Dendritic cell treated with granulocyte-macrophage colony-stimulating factor and Interleukin-4, amounts not matched to agents 40 ng/mL and 50 ng/mL, for 4 days (primary cell): ENCODE measurements at regions of chr7 and their contacts with region 1.

Region 1: DNA sequence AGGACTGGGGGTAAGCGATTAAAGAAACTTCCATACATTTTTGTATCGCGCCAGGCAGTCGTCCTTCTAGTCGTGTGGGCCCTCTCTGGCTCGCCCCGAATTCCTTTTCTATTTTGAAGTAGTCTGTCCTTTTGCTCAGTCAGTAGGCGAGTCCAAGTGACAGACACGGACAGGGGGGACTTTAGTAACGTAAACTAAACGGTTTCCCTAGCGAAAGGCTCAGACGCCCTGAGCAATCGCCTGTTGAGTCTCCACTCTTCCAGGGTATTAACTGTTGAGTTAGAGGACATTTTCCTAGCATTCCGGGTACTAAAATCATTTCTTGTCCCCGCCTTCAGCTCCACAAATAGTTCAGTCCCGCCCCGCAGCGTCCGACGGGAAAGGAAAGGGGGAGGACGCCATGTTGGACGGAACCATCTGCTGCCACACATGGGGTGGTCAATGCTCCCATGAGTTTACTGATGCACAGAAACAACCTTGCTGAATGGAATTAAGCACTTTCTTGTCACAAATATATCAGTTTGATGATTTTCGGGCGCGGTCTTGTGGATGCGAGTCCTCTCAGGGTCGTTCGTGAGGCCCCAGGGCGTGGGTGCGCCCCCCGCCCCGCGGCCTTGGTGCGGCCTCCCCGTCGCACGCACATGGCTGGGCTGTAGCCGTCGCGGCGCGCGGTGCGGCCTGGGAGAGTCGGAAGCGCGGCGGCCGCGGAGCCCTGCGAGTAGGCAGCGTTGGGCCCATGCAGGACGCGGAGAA is at the start of gene EIF3B:
- H3K4me3 Mint-ChIP-seq: peak within 1 kb of the TSS; percentile 87
- H3K27ac Mint-ChIP-seq: peak within 1 kb of the TSS; percentile 100
- H3K4me1 Mint-ChIP-seq: peaks cover 28% of the 10 kb centered on the region
- H3K27me3 Mint-ChIP-seq: no peaks in the 10 kb centered on the region

Region 2: DNA sequence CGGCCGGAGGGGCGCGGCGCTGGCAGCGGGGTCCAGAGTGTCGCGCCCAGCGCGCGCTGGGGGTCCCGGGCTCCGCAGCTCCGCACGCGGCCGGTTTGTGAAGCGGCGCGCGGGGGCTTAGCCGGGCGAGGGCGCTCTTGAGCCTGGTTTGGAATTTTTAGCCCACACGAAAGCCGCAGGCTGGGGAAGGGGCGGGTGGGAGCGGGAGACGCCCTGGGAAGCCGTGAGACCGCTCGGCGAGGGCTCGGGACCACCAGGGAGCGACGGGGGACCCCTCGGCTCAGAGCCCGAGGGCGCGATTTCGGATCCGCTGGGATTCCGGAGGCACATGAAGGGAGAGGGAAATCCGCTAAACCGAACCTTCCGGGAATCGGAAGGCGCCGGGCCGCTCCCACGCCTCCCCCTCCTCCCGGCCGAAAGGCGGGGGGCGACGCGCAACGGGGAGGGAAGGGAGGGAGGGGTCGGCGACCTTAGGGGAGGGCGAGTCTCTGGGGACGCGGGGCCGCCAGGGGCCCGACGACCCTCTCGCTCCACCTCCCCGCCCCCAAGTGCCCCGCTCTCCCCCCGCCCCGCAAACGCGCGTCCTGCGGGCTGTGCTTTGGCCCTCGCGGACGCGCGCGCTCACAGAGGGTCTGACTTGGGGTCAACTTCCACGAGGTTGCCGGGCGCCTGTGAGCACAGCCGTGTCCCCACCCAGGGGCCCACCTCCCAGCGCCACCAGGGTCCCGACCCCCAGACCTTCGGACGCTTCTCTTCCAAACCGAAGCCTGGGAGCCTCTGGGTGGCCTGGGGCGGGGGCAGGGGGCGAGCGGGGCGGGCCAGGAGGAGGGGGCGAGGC is 689.4 kb before region 1 on chr7:
- intact Hi-C with region 1: loop called (anchors 10 kb)
- H3K4me3 Mint-ChIP-seq: peak overlapping the region; percentile 62
- H3K27ac Mint-ChIP-seq: no peak overlapping the region
- H3K4me1 Mint-ChIP-seq: peaks cover 11% of the 10 kb centered on the region
- H3K27me3 Mint-ChIP-seq: peaks cover 73% of the 10 kb centered on the region

Region 3: DNA sequence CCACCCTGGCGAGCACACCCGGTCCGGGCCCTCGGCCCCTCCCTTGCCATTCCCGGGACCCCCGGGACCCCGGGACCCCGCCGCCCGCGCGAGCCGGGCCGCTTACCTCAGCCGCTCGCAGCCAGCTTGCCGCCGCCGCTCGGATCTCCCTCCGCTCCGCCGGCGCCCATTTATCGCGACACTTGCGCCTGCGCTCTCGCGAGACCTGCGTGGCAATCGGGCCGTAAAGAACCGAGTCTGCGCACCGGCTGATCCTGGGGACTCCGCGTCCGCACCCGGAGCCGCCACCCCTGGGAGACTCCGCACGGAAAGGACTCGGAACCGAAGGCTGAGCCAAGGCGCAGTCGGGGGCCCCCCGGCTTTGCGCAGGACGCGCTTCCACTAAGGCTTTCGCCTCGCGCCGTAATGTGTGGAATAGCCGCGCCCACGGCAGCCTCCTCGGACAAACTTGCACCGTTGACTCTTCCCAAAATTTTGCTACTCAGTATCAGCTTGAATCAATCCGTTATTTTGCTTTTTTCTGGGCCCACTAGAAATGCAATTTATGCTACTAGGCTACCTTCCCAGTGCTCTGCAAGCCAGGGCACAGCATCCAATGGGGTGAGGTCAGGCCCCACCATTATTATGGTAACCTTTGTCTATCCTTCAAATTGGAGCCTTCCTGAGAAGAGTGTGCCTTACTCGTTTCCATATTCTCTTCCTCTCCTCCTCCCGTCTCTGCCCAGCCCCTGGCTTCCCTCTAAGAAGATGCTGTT is 121.4 kb before region 1 on chr7 and contains the start of gene MAD1L1:
- intact Hi-C with region 1: loop called (anchors 5 kb)
- H3K4me3 Mint-ChIP-seq: peak within 1 kb of the TSS; percentile 88
- H3K27ac Mint-ChIP-seq: peak within 1 kb of the TSS; percentile 90
- H3K4me1 Mint-ChIP-seq: peaks cover 65% of the 10 kb centered on the region
- H3K27me3 Mint-ChIP-seq: no peaks in the 10 kb centered on the region

Region 4: DNA sequence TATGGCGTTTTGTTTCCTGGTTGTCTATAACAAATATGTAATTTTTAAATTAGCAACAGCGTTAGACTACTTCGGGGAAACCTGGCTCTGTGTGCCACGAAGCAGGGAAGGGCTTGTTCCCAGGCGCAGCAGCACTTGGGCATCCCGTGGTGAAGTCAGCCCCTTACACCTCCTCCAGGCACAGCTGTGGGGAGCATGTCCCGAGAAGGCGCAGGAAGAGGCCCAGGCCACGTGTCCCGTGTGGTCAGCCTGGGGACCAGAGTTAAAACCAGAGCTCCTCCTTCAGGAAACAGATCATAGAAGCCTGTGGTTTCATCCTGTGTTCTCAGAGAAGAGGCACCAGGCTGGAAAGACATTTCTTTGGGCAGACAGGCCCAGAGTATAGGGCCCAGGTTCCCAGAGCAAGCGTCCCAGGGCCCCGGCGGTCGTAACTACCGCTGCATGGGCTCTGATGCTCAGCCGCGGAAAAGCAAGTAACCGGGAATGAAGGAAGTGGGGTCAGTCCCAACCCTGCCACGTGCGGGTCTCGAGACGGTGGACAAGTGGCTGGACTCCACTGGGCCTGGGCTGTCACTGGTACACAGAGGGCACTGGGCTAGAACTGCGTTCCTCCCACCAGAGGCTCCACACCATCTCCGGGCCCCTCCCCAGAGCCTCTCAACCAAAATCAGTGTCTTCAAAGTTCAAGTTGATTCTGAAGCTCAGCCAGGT is 105.2 kb before region 1 on chr7:
- intact Hi-C with region 1: loop called (anchors 5 kb)
- H3K4me3 Mint-ChIP-seq: peak overlapping the region; percentile 47
- H3K27ac Mint-ChIP-seq: peak overlapping the region; percentile 69
- H3K4me1 Mint-ChIP-seq: peaks cover 97% of the 10 kb centered on the region
- H3K27me3 Mint-ChIP-seq: no peaks in the 10 kb centered on the region

Region 5: DNA sequence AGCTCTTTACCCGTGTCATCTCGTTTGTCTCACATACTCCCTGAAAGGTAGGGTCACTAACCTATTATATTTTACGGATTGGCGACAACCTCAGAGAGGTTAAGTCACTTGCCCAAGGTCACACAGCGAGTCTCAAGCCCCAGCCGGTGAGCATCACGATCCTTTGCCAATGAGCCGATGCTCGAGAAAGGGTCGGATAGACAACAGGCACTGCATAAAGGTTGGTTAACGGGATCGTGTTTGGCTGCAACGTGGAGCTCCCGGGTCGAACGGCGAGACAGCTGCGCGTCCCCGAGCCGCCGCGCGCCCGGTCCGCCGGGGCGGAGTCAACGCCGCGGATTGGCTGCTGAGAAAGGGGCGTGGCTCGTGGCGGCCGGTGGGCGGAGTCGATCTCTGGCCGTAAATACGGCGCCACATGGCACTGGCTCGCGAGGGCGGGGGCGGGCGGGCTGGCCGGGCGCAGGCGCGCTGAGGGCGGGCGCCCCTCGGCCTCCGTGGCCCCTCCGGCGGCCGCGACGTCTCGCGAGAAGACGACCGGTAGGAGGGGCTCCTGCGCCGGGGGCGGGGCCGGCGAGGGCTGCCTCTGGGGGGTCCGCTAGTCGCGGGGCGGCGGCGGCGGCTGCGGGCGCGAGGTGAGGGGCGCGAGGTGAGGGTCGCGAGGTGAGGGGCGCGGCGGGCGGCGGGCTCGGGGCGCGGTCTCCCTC is 48.8 kb after region 1 on chr7 and contains the start of gene CHST12:
- intact Hi-C with region 1: loop called (anchors 10 kb)
- H3K4me3 Mint-ChIP-seq: peak within 1 kb of the TSS; percentile 82
- H3K27ac Mint-ChIP-seq: peak within 1 kb of the TSS; percentile 74
- H3K4me1 Mint-ChIP-seq: peaks cover 59% of the 10 kb centered on the region
- H3K27me3 Mint-ChIP-seq: peaks cover 4% of the 10 kb centered on the region

Region 6: GRCh38 chr7:3134715-3135114 is 780.4 kb after region 1 on chr7:
- intact Hi-C with region 1: no loop called
- H3K4me3 Mint-ChIP-seq: no peak overlapping the region
- H3K27ac Mint-ChIP-seq: no peak overlapping the region
- H3K4me1 Mint-ChIP-seq: peaks cover 6% of the 10 kb centered on the region
- H3K27me3 Mint-ChIP-seq: peaks cover 26% of the 10 kb centered on the region